CD4-positive, alpha-beta T cell (primary cell): ENCODE measurements at regions of chr6 and their contacts with region 1.

Region 1: DNA sequence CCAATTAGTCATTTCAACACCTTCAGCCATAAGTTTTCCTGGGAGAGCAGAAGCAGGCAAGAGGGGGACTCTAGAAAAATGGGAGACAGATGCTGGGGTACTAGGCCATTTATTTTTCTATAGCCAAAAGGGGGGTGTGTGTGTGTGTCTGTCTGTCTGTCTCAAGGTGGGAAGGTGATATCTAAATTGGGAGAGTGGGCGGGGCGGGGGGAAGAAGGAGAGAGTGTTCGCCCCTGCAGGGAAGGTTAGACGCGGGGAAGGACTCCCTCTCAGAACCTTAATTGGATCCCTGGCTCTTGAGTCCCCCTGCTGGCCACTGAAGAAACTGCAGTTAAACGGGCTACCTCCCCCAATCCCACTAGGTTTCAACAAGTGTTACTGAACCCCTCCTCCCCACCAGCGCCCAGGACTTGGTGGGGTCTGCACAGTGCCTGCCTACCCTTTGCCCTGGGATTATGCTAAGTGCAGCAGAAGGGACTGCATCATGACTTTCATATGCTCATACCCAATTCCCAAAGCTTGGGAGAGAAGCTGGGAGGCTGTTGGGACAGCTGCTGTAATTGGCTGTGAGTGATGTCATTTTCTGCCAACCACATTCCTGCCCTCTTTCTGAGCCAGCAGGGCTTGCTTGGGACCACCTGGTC is 45.8 kb downstream of the FOXP4 start:
- DNase-seq: peak; percentile 67 to 84 (median 76)
- ATAC-seq: peak; percentile 83
- H3K4me3 ChIP-seq: no peak overlapping the region
- H3K4me3 Mint-ChIP-seq: no peak overlapping the region
- H3K27ac ChIP-seq: no peak overlapping the region
- H3K27ac Mint-ChIP-seq: no peak overlapping the region
- H3K4me1 ChIP-seq: peaks cover 5% of the 10 kb centered on the region
- H3K4me1 Mint-ChIP-seq: no peaks in the 10 kb centered on the region
- H3K27me3 ChIP-seq: no peaks in the 10 kb centered on the region
- H3K27me3 Mint-ChIP-seq: no peaks in the 10 kb centered on the region
- CTCF ChIP-seq: peak; percentile 86

Region 2: GRCh38 chr6:41367700-41368099 is 224.3 kb before region 1 on chr6:
- CTCF ChIA-PET with region 1: no interaction called
- POLR2A ChIA-PET with region 1: no interaction called
- intact Hi-C with region 1: loop called (anchors 1 kb)
- DNase-seq: no peak
- ATAC-seq: no peak
- H3K4me3 ChIP-seq: no peak overlapping the region
- H3K4me3 Mint-ChIP-seq: no peak overlapping the region
- H3K27ac ChIP-seq: no peak overlapping the region
- H3K27ac Mint-ChIP-seq: no peak overlapping the region
- H3K4me1 ChIP-seq: peaks cover 26% of the 10 kb centered on the region
- H3K4me1 Mint-ChIP-seq: peaks cover 27% of the 10 kb centered on the region
- H3K27me3 ChIP-seq: peaks cover 42 to 56% of the 10 kb centered on the region in 2 experiments
- H3K27me3 Mint-ChIP-seq: peaks cover 72% of the 10 kb centered on the region
- CTCF ChIP-seq: no peak

Region 3: GRCh38 chr6:41424370-41425058 is 167.5 kb before region 1 on chr6:
- CTCF ChIA-PET with region 1: interaction called, 13 read pairs
- POLR2A ChIA-PET with region 1: no interaction called
- intact Hi-C with region 1: loop called (anchors 1 kb)
- DNase-seq: peak; percentile 57 to 88 (median 78)
- ATAC-seq: peak; percentile 63
- H3K4me3 ChIP-seq: no peak overlapping the region
- H3K4me3 Mint-ChIP-seq: no peak overlapping the region
- H3K27ac ChIP-seq: no peak overlapping the region
- H3K27ac Mint-ChIP-seq: no peak overlapping the region
- H3K4me1 ChIP-seq: peaks cover 37% of the 10 kb centered on the region
- H3K4me1 Mint-ChIP-seq: peaks cover 8% of the 10 kb centered on the region
- H3K27me3 ChIP-seq: peaks cover 20 to 34% of the 10 kb centered on the region in 2 experiments
- H3K27me3 Mint-ChIP-seq: peaks cover 27% of the 10 kb centered on the region
- CTCF ChIP-seq: peak; percentile 87

Region 4: GRCh38 chr6:41463062-41463930 is 128.7 kb before region 1 on chr6:
- CTCF ChIA-PET with region 1: no interaction called
- POLR2A ChIA-PET with region 1: no interaction called
- intact Hi-C with region 1: loop called in 1 of 2 experiments (anchors 1 kb)
- DNase-seq: peak in 4 of 14 experiments; percentile 10 to 36 (median 34)
- ATAC-seq: no peak
- H3K4me3 ChIP-seq: no peak overlapping the region
- H3K4me3 Mint-ChIP-seq: no peak overlapping the region
- H3K27ac ChIP-seq: no peak overlapping the region
- H3K27ac Mint-ChIP-seq: no peak overlapping the region
- H3K4me1 ChIP-seq: no peaks in the 10 kb centered on the region
- H3K4me1 Mint-ChIP-seq: no peaks in the 10 kb centered on the region
- H3K27me3 ChIP-seq: peaks cover 11 to 18% of the 10 kb centered on the region in 2 experiments
- H3K27me3 Mint-ChIP-seq: peaks cover 60% of the 10 kb centered on the region
- CTCF ChIP-seq: peak; percentile 25

Region 5: GRCh38 chr6:41638002-41638934 is 46.3 kb after region 1 on chr6 and contains the start of gene MDFI:
- CTCF ChIA-PET with region 1: no interaction called
- POLR2A ChIA-PET with region 1: no interaction called
- intact Hi-C with region 1: no loop called
- DNase-seq: no peak
- ATAC-seq: no peak
- H3K4me3 ChIP-seq: no peak within 1 kb of the TSS
- H3K4me3 Mint-ChIP-seq: peak within 1 kb of the TSS; percentile 71
- H3K27ac ChIP-seq: no peak within 1 kb of the TSS
- H3K27ac Mint-ChIP-seq: no peak within 1 kb of the TSS
- H3K4me1 ChIP-seq: peaks cover 15% of the 10 kb centered on the region
- H3K4me1 Mint-ChIP-seq: peaks cover 13% of the 10 kb centered on the region
- H3K27me3 ChIP-seq: peaks cover 22 to 60% of the 10 kb centered on the region in 2 experiments
- H3K27me3 Mint-ChIP-seq: peaks cover 67% of the 10 kb centered on the region
- CTCF ChIP-seq: no peak
- total RNA-seq, gene MDFI: not detected